Aorta (tissue), 5 donors: ENCODE measurements at regions of chr9 and their contacts with region 1.

Region 1: DNA sequence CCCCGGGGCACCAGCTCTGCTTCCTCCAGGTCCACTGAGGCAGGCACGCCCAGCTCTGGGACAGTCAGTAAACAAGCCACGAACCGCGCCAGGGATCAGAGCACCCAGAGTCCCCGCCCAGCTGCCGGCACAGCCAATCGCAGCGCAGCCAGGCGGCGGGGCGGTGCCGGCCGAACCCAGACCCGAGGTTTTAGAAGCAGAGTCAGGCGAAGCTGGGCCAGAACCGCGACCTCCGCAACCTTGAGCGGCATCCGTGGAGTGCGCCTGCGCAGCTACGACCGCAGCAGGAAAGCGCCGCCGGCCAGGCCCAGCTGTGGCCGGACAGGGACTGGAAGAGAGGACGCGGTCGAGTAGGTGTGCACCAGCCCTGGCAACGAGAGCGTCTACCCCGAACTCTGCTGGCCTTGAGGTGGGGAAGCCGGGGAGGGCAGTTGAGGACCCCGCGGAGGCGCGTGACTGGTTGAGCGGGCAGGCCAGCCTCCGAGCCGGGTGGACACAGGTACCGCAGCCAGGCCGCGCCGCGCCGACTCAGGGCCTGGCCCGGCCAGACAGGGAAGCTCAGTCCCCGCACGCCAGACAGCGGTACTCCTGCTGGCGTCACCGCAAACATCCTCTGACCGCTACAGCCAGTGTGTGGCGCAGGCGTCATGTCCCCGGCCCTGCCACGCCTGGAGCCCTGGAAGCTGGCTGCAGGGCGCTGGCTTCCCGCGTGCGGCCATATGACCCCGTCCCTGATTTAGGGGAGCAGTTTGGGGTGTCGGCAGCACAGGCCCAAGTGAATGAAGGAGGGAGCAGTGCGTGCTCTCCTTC is at the start of gene CTSL:
- DNase-seq: peak; percentile 96
- ATAC-seq: peak; percentile 97
- H3K4me3 ChIP-seq: peak within 1 kb of the TSS; percentile 13 to 51
- H3K27ac ChIP-seq: peak within 1 kb of the TSS; percentile 60 to 77
- H3K4me1 ChIP-seq: no peaks in the 10 kb centered on the region
- H3K27me3 ChIP-seq: no peaks in the 10 kb centered on the region
- total RNA-seq, gene CTSL: 130 to 174 TPM

Region 2: GRCh38 chr9:88534456-88535261 is 808.6 kb after region 1 on chr9 and contains the start of gene NXNL2:
- intact Hi-C with region 1: loop called in 1 of 2 experiments (anchors 10 kb)
- DNase-seq: peak; percentile 89 to 96
- ATAC-seq: peak; percentile 89
- H3K4me3 ChIP-seq: peak within 1 kb of the TSS; percentile 37 to 80
- H3K27ac ChIP-seq: peak within 1 kb of the TSS in 1 of 2 donors; percentile 96
- H3K4me1 ChIP-seq: no peaks in the 10 kb centered on the region
- H3K27me3 ChIP-seq: no peaks in the 10 kb centered on the region
- total RNA-seq, gene NXNL2: 0.78 to 2.2 TPM